Psoas muscle (tissue), 8 donors: ENCODE measurements at regions of chr20 and their contacts with region 1.

Region 1: GRCh38 chr20:5890773-5891410 is 59.4 kb downstream of the TRMT6 start:
- DNase-seq: peak; percentile 53 to 79
- ATAC-seq: peak; percentile 80 to 82 (median 82)
- H3K4me3 ChIP-seq: no peak overlapping the region
- H3K27ac ChIP-seq: peak overlapping the region; percentile 79
- H3K4me1 ChIP-seq: peaks cover 30% of the 10 kb centered on the region
- H3K27me3 ChIP-seq: no peaks in the 10 kb centered on the region
- CTCF ChIP-seq: no peak

Region 2: DNA sequence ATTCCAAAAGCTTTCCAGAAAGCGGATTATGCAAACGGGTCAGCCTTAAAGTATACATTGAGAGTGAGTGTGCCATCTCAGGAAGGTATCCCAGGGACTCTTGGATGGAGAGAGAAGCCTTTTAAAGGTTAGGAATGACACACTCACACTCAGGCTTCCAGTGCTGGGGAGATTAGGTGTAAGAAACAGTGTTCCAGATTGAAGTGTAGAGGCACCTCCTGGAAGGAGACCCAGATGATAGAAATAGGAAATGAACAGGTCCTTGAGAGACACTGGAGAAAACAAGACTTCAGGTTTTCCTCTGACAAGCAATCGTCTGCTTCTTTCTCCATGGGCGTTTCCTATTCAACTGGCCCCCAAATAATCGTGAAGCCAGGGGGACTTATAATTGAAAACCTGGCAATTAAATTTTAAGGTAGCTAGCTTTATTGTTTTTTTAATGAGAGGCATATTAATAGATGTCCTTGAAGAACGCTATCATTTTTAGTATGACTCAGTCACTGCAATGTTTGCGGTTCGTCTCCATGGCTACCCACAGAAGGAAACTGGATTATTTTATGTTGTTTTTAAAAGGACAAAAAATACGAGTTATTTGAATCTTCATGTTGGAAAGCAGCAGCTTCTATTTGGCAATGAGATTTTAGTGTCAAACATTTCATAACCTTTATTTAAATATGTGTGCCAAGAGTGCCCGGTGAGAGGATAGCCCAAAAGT is 25.9 kb before region 1 on chr20:
- intact Hi-C with region 1: loop called in 1 of 2 experiments (anchors 2 kb)
- DNase-seq: no peak
- ATAC-seq: peak in 1 of 4 donors; percentile 9
- H3K4me3 ChIP-seq: no peak overlapping the region
- H3K27ac ChIP-seq: peak overlapping the region; percentile 79
- H3K4me1 ChIP-seq: peaks cover 33% of the 10 kb centered on the region
- H3K27me3 ChIP-seq: no peaks in the 10 kb centered on the region
- CTCF ChIP-seq: no peak

Region 3: GRCh38 chr20:6212903-6213302 is 322.0 kb after region 1 on chr20:
- intact Hi-C with region 1: no loop called
- DNase-seq: no peak
- ATAC-seq: no peak
- H3K4me3 ChIP-seq: no peak overlapping the region
- H3K27ac ChIP-seq: no peak overlapping the region
- H3K4me1 ChIP-seq: no peaks in the 10 kb centered on the region
- H3K27me3 ChIP-seq: no peaks in the 10 kb centered on the region
- CTCF ChIP-seq: no peak